HepG2 (cell line): ENCODE measurements at regions of chr13 and their contacts with region 1.

Region 1: GRCh38 chr13:19782049-19782726 is 557 bp downstream of the PSPC1 start:
- DNase-seq: no peak
- ATAC-seq: peak; percentile 70
- H3K4me3 ChIP-seq: peak overlapping the region; percentile 93 to 99 (median 94)
- H3K27ac ChIP-seq: peak overlapping the region; percentile 87
- H3K4me1 ChIP-seq: peaks cover 5% of the 10 kb centered on the region; the same call in 1 of the 2 replicates
- H3K27me3 ChIP-seq: no peaks in the 10 kb centered on the region; a peak in 1 of 5 replicates
- CTCF ChIP-seq: no peak
- EP300 ChIP-seq: no peak
- POLR2A ChIP-seq: no peak
- RAD21 ChIP-seq: no peak

Region 2: DNA sequence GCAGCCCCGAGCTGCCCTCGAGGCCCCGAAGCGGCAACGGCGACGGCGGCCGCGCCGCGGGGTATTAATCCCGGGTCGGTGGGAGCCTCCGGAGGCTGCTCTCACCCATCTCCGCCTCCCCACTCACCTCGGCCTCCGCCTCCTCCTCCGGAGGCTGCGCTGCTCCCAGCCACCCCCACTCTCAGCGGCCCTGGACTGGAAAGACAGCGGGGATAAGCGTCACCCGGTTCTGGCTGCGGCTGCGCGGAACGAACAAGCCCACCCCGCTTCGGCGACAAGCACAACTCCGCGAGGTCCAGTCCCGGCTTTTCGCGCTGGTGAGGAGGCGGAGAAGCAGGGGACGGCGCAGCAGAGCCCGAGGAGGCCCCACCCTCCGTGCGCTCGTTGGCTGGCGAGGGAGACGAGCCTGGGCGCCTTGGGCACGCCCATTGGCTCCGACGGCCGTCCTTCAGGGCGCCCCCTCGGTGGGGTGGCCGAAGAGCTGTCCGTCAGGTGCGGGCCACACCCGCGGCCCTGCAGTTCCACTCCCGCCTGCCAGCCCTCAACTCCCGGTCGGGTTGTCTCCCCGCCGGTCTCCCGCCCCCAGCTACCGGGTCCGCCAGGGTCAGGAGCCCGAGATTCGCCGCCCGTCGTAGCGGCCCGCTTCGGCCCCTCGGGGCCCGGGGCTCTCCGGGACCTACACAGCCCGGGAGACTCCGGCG is 81.3 kb after region 1 on chr13 and contains the start of gene ZMYM5:
- CTCF ChIA-PET with region 1: no interaction called
- POLR2A ChIA-PET with region 1: interaction called, 3 read pairs
- in situ Hi-C with region 1: no loop called
- intact Hi-C with region 1: loop called (anchors 2 kb)
- DNase-seq: peak; percentile 93
- ATAC-seq: peak; percentile 96
- H3K4me3 ChIP-seq: peak within 1 kb of the TSS; percentile 81 to 86 (median 82)
- H3K27ac ChIP-seq: peak within 1 kb of the TSS; percentile 87
- H3K4me1 ChIP-seq: peaks cover 21% of the 10 kb centered on the region
- H3K27me3 ChIP-seq: no peaks in the 10 kb centered on the region; a peak in 1 of 5 replicates
- CTCF ChIP-seq: no peak
- EP300 ChIP-seq: no peak
- POLR2A ChIP-seq: peak; percentile 45 to 77
- RAD21 ChIP-seq: peak; percentile 10; the same call in 1 of the 2 replicates
- total RNA-seq, gene ZMYM5: 9.4 and 9.8 TPM in 2 replicates

Region 3: DNA sequence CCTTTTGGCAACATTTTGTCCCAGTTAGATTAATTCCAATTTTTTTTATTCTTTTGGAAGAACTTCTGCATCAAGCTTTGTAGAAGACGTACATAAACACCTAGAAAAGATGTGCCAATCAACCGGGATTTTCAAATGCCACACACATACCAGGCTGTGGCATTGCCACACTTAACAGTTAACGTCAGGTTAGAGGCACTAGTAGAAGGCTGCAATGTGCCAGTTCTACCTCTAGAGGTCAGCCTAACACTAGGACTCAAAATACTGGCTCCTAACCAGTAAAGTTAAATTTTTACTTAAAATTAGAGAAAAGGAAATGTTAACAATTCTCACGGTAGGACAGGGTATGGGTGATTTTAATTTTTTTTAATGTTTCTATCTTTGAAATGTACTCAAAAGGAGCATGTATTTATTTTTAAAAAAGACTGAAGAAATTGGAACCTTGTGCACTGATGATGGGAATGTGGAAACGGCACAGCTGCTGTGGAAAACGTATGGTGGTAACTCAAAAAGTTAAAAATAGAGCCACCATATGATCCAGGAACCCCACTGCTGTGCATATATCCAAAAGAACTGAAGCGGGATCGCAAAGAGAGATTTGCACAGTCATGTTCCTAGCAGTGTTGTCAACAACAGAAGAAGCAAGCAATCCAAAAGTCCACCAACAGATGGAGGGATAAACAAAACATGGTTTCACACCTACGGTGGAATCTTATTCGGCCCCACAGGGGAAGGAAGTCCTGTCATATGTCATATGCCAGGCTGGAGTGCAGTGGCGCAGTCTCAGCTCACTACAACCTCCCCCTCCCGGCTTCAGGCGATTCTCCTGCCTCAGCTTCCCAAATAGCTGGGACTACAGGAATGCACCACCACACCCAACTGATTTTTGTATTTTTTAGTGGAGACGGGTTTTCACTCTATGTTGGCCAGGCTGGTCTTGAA is 713.2 kb after region 1 on chr13:
- CTCF ChIA-PET with region 1: no interaction called
- POLR2A ChIA-PET with region 1: no interaction called
- in situ Hi-C with region 1: no loop called
- intact Hi-C with region 1: no loop called
- DNase-seq: peak; percentile 66
- ATAC-seq: peak; percentile 70
- H3K4me3 ChIP-seq: peak overlapping the region in 2 of 3 experiments; percentile 32 to 34; a peak in 3 of 6 replicates
- H3K27ac ChIP-seq: peak overlapping the region; percentile 73
- H3K4me1 ChIP-seq: peaks cover 45% of the 10 kb centered on the region
- H3K27me3 ChIP-seq: no peaks in the 10 kb centered on the region
- CTCF ChIP-seq: peak; percentile 84
- EP300 ChIP-seq: peak in 1 of 2 experiments; percentile 15; a peak in 1 of 4 replicates
- POLR2A ChIP-seq: 0 out of 4 replicates have a peak, but pooled peaks of 1 of the 2 experiments have one; percentile 19
- RAD21 ChIP-seq: peak; percentile 77